ENCODE measurements at regions of chr2 and their contacts with region 1.

Region 1: GRCh38 chr2:71226965-71227560 is at the start of gene PAIP2B:
- DNase-seq: peak; percentile 90
- H3K4me3 ChIP-seq: peak within 1 kb of the TSS; percentile 80 to 90
- H3K27ac ChIP-seq: peak within 1 kb of the TSS in 1 of 2 experiments; percentile 17; a peak in 1 of 4 replicates
- H3K4me1 ChIP-seq: peaks cover 0 to 4% of the 10 kb centered on the region in 2 experiments; a peak in 1 of 4 replicates
- H3K27me3 ChIP-seq: no peaks in the 10 kb centered on the region
- CTCF ChIP-seq: no peak
- EP300 ChIP-seq: no peak
- RAD21 ChIP-seq: no peak; the same call in 1 of the 2 replicates
- polyA plus RNA-seq, gene PAIP2B: 0.20 and 0.23 TPM in 2 replicates

Region 2: GRCh38 chr2:71243634-71244304 is 16.7 kb after region 1 on chr2:
- CTCF ChIA-PET with region 1: interaction called, 11 read pairs
- POLR2A ChIA-PET with region 1: no interaction called
- DNase-seq: peak; percentile 50
- H3K4me3 ChIP-seq: no peak overlapping the region
- H3K27ac ChIP-seq: no peak overlapping the region
- H3K4me1 ChIP-seq: peaks cover 0 to 5% of the 10 kb centered on the region in 2 experiments; a peak in 2 of 4 replicates
- H3K27me3 ChIP-seq: no peaks in the 10 kb centered on the region; the same call in 1 of the 2 replicates
- CTCF ChIP-seq: no peak
- EP300 ChIP-seq: no peak
- RAD21 ChIP-seq: no peak

Region 3: DNA sequence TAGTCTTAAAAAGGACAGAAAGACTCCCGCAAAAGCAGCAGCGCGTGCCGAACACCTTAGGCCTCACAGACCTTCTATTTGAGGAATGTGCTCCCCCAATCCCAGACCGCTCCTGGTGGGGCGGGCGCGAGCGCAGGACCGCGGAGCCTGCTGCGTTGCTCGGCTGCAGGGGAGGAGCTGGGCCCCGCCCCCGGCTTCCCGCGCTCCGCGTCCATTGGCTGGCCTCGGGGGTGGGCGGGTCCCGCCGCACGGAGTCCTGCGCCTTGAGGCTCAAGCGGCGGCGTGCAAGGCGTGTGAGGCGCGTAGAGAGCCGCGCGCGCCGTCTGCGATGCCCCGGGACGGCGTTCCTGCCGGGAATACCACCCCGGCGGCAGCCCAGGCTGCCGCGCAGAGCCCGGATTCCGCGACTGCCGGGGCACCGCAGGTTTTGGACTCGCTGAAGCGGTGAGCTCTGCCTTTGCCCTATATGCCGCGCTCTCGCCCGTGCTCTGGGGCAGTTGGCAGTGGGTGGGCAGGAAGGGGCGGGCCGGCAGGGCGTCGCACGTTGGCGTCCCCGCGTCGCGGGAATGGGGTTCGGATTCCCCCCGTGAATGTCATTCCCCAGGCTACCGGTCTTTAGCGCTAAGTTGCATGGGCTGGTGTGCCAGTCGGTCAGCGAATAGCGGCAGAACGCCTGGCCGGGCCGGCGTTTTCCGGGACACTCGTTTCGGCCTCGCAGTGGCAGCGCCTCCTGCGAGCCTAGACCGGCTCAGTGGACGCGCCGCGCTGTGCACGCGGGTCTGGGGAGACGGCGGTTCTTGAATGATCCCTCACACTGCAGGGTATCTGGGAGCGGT is 49.5 kb after region 1 on chr2:
- CTCF ChIA-PET with region 1: interaction called, 22 read pairs
- POLR2A ChIA-PET with region 1: no interaction called
- DNase-seq: peak; percentile 95
- H3K4me3 ChIP-seq: peak overlapping the region; percentile 61 to 67
- H3K27ac ChIP-seq: peak overlapping the region; percentile 23 to 44; a peak in 2 of 4 replicates
- H3K4me1 ChIP-seq: peaks cover 0 to 2% of the 10 kb centered on the region in 2 experiments; a peak in 2 of 4 replicates
- H3K27me3 ChIP-seq: no peaks in the 10 kb centered on the region; the same call in 1 of the 2 replicates
- CTCF ChIP-seq: no peak
- EP300 ChIP-seq: no peak
- RAD21 ChIP-seq: no peak

Region 4: GRCh38 chr2:71282495-71282894 is 55.4 kb after region 1 on chr2:
- CTCF ChIA-PET with region 1: interaction called, 22 read pairs
- POLR2A ChIA-PET with region 1: no interaction called
- DNase-seq: no peak
- H3K4me3 ChIP-seq: no peak overlapping the region
- H3K27ac ChIP-seq: no peak overlapping the region
- H3K4me1 ChIP-seq: peaks cover 0 to 5% of the 10 kb centered on the region in 2 experiments; a peak in 2 of 4 replicates
- H3K27me3 ChIP-seq: no peaks in the 10 kb centered on the region
- CTCF ChIP-seq: peak; percentile 23; the same call in 1 of the 2 replicates
- EP300 ChIP-seq: no peak
- RAD21 ChIP-seq: peak; percentile 27; the same call in 1 of the 2 replicates

Measured in SK-N-SH (cell line).